H1 (cell line): ENCODE measurements at regions of chr14 and their contacts with region 1.

Region 1: GRCh38 chr14:21003788-21004346 is 4.8 kb downstream of the SLC39A2 start:
- DNase-seq: no peak
- H3K4me3 ChIP-seq: no peak overlapping the region
- H3K27ac ChIP-seq: no peak overlapping the region
- H3K4me1 ChIP-seq: peaks cover 1 to 3% (median 3%) of the 10 kb centered on the region in 4 experiments; a peak in 5 of 7 replicates
- H3K27me3 ChIP-seq: no peaks in the 10 kb centered on the region
- CTCF ChIP-seq: no peak
- EP300 ChIP-seq: no peak
- POLR2A ChIP-seq: no peak
- RAD21 ChIP-seq: no peak

Region 2: DNA sequence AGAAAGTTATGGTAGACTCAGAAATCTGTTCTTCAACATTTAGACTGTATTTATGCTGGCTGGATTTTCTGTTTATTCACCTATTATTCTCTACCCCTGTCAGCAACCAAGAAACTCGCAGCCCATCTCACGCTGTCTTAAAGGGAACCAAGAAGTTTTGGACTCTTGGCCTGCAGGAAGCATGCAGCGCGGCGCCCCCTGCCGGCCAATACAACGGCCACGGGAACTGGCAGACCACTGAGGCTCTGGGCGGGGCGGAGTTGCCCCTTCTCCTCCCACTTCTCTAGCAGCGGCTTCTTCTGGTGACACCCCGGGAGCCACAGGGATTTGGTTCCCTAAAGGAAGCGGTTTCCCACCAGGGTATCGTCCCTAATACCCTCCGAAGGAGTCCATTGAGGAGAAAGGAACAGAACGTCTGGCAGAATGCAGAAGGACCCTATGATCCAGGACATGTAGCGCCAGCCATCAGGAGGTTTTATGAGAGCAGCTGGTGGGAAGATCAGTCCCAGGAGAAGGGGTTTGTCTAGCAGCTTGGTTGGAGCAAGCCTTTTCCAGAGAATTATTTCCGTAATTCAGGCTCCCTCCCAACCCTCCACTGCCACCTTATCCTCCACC is 69.6 kb before region 1 on chr14:
- CTCF ChIA-PET with region 1: no interaction called
- POLR2A ChIA-PET with region 1: no interaction called
- DNase-seq: peak; percentile 54 to 96
- H3K4me3 ChIP-seq: peak overlapping the region in 1 of 4 experiments; percentile 31; a peak in 1 of 8 replicates
- H3K27ac ChIP-seq: no peak overlapping the region
- H3K4me1 ChIP-seq: no peaks in the 10 kb centered on the region
- H3K27me3 ChIP-seq: no peaks in the 10 kb centered on the region
- CTCF ChIP-seq: peak; percentile 88 to 95 (median 94)
- EP300 ChIP-seq: no peak
- POLR2A ChIP-seq: no peak
- RAD21 ChIP-seq: peak; percentile 56 to 69

Region 3: DNA sequence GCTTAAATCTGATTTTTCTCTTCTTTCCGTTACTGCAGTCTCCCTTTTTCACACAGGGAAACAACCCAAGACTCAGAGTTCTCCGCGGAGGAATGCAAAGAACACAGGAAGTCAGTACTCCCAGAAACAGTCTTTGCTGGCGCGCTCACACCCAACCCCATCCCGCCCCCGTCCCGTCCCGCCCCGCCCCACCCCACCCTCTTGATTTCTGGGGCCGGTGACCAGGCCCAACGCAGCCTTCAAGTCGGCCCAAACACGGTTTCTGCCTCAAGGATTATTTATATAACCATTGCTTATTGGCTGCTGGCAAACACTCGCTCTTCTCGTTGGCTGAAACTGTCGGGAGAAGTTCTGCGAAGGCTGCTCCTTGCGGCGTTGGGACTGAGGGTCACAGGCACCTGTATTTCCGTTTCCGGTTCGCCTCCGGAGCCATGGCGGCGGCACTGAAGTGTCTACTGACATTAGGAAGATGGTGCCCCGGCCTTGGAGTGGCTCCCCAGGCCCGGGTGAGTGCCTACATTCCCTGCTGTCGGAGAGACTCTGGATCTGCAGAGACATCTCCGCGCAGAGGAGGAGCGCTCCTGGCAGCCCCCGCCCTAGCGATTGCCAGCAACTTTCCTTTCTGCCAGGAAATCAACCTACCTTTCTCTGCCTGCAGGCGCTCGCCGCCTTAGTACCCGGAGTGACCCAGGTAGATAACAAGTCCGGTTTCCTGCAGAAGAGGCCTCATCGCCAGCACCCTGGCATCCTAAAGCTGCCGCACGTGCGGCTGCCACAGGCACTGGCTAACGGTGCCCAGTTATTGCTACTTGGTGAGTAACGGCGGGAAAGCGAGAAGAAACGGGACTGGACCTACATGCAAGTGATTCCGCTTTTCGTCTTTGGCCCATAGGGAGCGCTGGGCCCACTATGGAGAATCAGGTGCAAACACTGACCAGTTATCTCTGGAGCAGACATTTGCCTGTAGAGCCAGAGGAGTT is 14.0 kb before region 1 on chr14 and contains the start of gene METTL17:
- CTCF ChIA-PET with region 1: interaction called, 17 read pairs
- POLR2A ChIA-PET with region 1: interaction called, 3 read pairs
- DNase-seq: peak; percentile 85 to 89
- H3K4me3 ChIP-seq: peak within 1 kb of the TSS; percentile 65 to 98 (median 96)
- H3K27ac ChIP-seq: peak within 1 kb of the TSS; percentile 34; the same call in 1 of the 2 replicates
- H3K4me1 ChIP-seq: peaks cover 2 to 4% (median 4%) of the 10 kb centered on the region in 4 experiments; a peak in 3 of 7 replicates
- H3K27me3 ChIP-seq: no peaks in the 10 kb centered on the region
- CTCF ChIP-seq: peak; percentile 36 to 60 (median 49); a peak in 3 of 4 replicates
- EP300 ChIP-seq: no peak
- POLR2A ChIP-seq: peak in 1 of 2 experiments; percentile 83; a peak in 2 of 3 replicates
- RAD21 ChIP-seq: peak; percentile 33 to 46
- total RNA-seq, gene METTL17: 73.8 and 75.8 TPM in 2 replicates

Region 4: DNA sequence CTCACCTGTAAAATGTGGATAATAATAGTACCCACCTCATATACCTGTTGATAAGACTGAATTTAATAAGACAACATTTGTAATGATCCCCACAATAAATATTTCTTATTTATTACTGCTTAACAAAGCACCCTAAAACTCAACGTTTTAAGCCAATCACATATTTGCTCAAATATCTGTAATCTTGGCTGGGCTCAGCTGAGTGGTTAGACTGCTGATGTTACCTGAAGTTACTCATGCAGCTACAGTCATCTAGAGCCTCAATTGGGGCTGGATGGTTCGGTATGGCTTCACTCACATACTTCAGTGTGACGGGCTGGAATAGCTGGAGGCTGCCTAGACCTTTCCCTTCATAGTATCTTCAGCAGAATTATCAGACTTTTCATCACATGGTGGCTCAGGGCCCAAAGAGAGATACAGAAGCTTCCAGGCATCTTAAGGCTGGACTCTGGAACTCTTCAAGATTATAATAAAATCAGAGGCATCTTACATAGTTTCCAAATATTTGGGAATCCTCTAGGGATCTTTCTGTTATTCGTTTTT is 156.3 kb after region 1 on chr14:
- CTCF ChIA-PET with region 1: no interaction called
- POLR2A ChIA-PET with region 1: no interaction called
- DNase-seq: no peak
- H3K4me3 ChIP-seq: no peak overlapping the region
- H3K27ac ChIP-seq: no peak overlapping the region
- H3K4me1 ChIP-seq: no peaks in the 10 kb centered on the region
- H3K27me3 ChIP-seq: no peaks in the 10 kb centered on the region
- CTCF ChIP-seq: no peak
- EP300 ChIP-seq: no peak
- POLR2A ChIP-seq: no peak
- RAD21 ChIP-seq: no peak